Activated B cell treated with CpG ODN at 0.5 μM for 24 hours (primary cell): ENCODE measurements at regions of chr4 and their contacts with region 1.

Region 1: DNA sequence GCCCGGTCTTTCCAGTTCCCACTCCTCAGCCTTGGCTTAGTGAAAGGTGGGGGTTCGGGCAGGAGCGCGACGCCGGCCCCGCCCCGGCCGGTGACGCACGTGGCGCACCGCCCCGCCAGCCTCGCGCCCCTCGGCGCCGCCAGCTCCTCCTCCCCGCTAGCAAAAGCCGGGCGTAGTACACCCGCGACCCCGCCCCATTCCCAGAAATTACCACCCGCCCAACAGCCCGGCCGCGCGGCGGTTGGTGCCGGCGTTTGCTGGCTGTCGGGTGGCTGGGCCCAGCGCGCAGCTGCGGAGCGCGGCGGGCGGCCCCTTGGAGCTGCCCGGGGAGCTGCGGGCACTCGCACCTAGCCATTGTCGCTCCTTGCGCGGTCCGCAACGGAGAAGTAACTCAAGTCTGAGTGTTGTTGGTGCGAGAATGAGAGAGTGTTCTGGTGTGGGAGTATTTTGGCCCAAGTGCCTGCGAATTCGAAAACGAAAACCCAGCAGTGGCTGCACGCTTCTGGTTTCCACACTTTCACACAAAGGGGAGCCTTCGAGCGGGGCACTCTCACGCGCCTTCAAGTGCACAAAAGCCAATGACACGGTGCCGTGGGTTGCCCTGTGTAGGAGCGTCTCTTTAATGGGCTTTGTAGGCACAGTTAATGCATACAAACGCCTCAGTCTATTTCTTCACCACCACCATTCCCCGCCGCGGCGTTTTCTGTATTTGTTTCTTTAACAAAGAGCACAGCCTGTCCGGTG is 1.0 kb upstream of the ELF2 start:
- DNase-seq: peak; percentile 89
- ATAC-seq: peak; percentile 74
- H3K4me3 Mint-ChIP-seq: peak overlapping the region; percentile 93
- H3K27ac Mint-ChIP-seq: peak overlapping the region; percentile 92
- H3K4me1 Mint-ChIP-seq: peaks cover 25% of the 10 kb centered on the region
- H3K27me3 Mint-ChIP-seq: no peaks in the 10 kb centered on the region
- CTCF ChIP-seq: no peak

Region 2: DNA sequence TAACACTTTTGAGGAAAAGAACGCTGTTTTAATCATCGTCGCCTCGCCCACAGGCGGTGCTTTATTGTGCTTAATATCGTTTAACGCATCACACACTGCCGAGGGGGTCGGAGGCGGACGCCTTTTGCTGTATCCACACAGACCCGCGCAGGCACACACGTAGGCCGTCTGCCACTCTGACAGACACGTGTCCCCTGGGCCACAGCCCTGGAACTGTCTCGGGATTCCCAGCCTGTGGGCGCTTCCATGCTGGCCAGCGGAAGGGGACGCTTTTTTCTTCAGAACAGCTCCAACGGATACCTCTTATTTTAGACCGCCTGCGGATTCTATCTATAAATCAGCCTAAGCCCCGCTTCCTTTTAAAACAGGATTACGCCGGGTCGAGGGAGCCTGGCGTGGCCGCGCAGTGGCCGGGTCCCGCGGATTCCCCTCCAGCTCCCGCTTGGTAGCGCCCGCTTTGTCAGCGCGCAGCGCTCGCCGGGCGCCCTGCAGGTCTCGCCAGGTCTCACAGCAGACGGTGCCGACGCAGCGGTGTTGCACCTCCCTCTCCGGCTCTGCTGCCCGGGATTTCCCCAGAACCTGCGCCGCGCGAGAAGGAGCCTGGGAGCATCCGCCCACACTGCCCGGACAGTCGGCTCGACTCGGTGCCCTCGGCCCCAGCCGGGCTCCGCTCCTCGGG is 162.6 kb before region 1 on chr4 and contains the start of gene NOCT:
- CTCF ChIA-PET with region 1: no interaction called
- POLR2A ChIA-PET with region 1: interaction called, 22 read pairs
- intact Hi-C with region 1: loop called (anchors 1 kb)
- DNase-seq: peak; percentile 86
- ATAC-seq: peak; percentile 91
- H3K4me3 Mint-ChIP-seq: peak within 1 kb of the TSS; percentile 92
- H3K27ac Mint-ChIP-seq: peak within 1 kb of the TSS; percentile 99
- H3K4me1 Mint-ChIP-seq: peaks cover 32% of the 10 kb centered on the region
- H3K27me3 Mint-ChIP-seq: no peaks in the 10 kb centered on the region
- CTCF ChIP-seq: no peak
- total RNA-seq, gene NOCT: 9.1 and 9.4 TPM in 2 replicates

Region 3: DNA sequence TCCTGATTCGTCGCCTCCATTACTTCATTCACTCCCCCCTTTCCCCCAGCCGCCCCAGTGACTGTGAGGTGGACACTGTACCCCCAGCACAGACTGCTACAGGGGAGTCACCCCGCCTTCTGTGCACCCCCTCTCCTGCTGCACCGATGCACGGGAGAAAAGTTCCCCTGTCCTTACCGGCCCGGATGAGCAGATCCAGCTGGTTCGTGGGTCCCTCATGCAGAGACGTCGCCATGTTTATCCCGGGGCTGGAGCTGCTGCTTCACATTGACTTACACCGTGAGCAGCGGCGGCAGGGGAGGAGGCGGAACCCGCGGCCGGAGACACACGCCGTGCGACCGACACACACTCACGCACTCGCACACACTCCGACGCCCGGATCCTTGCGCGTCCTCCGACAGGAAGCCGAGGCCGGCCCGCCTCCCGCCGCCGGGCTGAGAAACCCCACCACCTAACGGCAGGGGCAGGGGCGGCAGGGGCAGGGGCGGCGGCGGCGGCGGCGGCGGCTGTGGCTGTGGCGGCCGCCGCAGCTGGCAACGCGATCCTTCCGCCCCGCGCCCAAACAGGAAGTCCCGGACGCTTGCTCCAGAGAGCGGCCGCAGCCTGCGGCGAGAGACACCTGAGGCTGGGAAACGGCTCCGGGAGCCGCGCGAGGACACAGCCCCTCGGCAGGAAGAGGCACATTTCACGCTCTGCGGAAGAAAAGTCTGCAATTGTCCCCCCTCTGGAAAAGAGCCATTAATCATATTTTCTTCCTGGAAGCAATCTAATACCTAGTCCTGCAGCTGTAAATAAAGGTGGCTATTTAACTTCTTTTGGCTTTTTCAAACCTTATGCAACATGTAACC is 93.9 kb before region 1 on chr4:
- CTCF ChIA-PET with region 1: interaction called, 3 read pairs
- POLR2A ChIA-PET with region 1: interaction called, 37 read pairs
- intact Hi-C with region 1: loop called (anchors 1 kb)
- DNase-seq: peak; percentile 79
- ATAC-seq: peak; percentile 66
- H3K4me3 Mint-ChIP-seq: peak overlapping the region; percentile 99
- H3K27ac Mint-ChIP-seq: peak overlapping the region; percentile 99
- H3K4me1 Mint-ChIP-seq: peaks cover 38% of the 10 kb centered on the region
- H3K27me3 Mint-ChIP-seq: no peaks in the 10 kb centered on the region
- CTCF ChIP-seq: no peak

Region 4: GRCh38 chr4:139142087-139142486 is 36.0 kb before region 1 on chr4:
- CTCF ChIA-PET with region 1: no interaction called
- POLR2A ChIA-PET with region 1: interaction called, 5 read pairs
- intact Hi-C with region 1: loop called (anchors 2 kb)
- DNase-seq: no peak
- ATAC-seq: peak; percentile 76
- H3K4me3 Mint-ChIP-seq: no peak overlapping the region
- H3K27ac Mint-ChIP-seq: peak overlapping the region; percentile 18
- H3K4me1 Mint-ChIP-seq: peaks cover 42% of the 10 kb centered on the region
- H3K27me3 Mint-ChIP-seq: no peaks in the 10 kb centered on the region
- CTCF ChIP-seq: no peak

Region 5: DNA sequence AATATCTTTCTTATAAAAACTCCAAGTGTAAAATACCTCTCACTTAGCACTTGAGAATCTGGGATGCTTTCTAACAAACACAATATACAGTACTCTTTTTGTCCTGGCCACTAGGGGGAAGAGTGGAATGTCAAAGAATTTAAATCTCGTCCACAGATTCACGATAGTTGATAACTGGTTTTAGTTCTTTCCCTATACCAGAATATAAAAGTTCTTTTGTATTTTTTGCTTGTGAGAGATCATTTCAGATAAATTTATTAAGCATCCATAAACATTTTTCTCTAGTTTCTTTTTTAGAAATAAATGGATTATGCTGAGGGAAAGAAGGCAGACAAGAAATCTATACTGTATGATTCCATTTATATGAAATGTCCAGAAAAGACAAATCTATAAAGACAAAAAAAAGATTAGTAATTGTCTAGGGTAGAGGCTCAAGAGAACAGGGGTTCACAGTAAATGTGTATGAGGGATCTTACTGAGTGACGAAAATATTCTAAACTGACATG is 51.5 kb after region 1 on chr4:
- CTCF ChIA-PET with region 1: no interaction called
- POLR2A ChIA-PET with region 1: no interaction called
- intact Hi-C with region 1: loop called (anchors 1 kb)
- DNase-seq: no peak
- ATAC-seq: peak; percentile 61
- H3K4me3 Mint-ChIP-seq: no peak overlapping the region
- H3K27ac Mint-ChIP-seq: no peak overlapping the region
- H3K4me1 Mint-ChIP-seq: peaks cover 3% of the 10 kb centered on the region
- H3K27me3 Mint-ChIP-seq: no peaks in the 10 kb centered on the region
- CTCF ChIP-seq: no peak

Region 6: DNA sequence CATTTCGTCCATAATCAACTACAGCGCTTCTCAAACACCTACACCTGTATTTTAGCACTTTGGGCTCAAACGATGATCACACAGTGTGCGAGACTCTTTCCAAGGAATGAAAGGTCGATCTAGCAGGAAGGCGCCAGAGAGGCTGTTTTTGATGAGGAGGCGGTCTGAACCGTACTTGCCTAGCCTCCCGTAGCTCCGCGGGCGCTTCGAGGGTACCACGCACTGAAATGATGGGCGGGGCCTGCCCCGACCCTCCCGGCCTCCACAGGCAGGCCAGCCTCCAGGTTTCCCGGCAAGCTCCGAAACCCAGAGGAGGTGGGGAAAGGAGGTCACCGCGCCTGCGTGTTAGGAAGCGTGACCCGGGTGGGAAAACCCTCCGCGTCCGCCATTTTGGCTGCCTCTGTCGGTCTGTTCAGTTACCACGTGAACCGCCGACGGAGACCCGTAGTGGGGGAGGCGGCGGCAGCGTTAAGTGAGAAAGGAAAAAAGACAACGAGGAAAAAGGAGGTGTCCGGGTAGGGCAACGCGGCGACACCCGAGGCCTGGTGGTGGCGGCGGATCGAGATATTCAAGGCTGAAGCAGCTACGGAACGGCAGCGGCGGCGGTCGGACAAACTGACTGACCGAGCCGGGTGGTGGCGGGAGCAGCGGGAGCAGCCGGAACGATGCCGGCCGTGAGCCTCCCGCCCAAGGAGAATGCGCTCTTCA is 123.2 kb after region 1 on chr4 and contains the start of gene NAA15:
- CTCF ChIA-PET with region 1: interaction called, 8 read pairs
- POLR2A ChIA-PET with region 1: interaction called, 74 read pairs
- intact Hi-C with region 1: loop called (anchors 1 kb)
- DNase-seq: peak; percentile 93
- ATAC-seq: peak; percentile 91
- H3K4me3 Mint-ChIP-seq: peak within 1 kb of the TSS; percentile 99
- H3K27ac Mint-ChIP-seq: peak within 1 kb of the TSS; percentile 98
- H3K4me1 Mint-ChIP-seq: peaks cover 49% of the 10 kb centered on the region
- H3K27me3 Mint-ChIP-seq: no peaks in the 10 kb centered on the region
- CTCF ChIP-seq: no peak
- total RNA-seq, gene NAA15: 62.6 and 66.5 TPM in 2 replicates

Region 7: GRCh38 chr4:140523857-140524742 is 1346.1 kb after region 1 on chr4 and contains the start of gene ELMOD2:
- CTCF ChIA-PET with region 1: no interaction called
- POLR2A ChIA-PET with region 1: no interaction called
- intact Hi-C with region 1: loop called (anchors 2 kb)
- DNase-seq: peak; percentile 94
- ATAC-seq: peak; percentile 99
- H3K4me3 Mint-ChIP-seq: peak within 1 kb of the TSS; percentile 90
- H3K27ac Mint-ChIP-seq: peak within 1 kb of the TSS; percentile 84
- H3K4me1 Mint-ChIP-seq: peaks cover 14% of the 10 kb centered on the region
- H3K27me3 Mint-ChIP-seq: no peaks in the 10 kb centered on the region
- CTCF ChIP-seq: peak; percentile 72
- total RNA-seq, gene ELMOD2: 20.4 and 20.8 TPM in 2 replicates